Calu3 (cell line): ENCODE measurements at regions of chr3 and their contacts with region 1.

Region 1: GRCh38 chr3:177220136-177220974 is 23.1 kb upstream of the TBL1XR1 start:
- DNase-seq: no peak
- H3K4me3 Mint-ChIP-seq: no peak overlapping the region
- H3K27ac Mint-ChIP-seq: no peak overlapping the region
- H3K4me1 Mint-ChIP-seq: peaks cover 12% of the 10 kb centered on the region
- H3K27me3 Mint-ChIP-seq: no peaks in the 10 kb centered on the region
- CTCF ChIP-seq: no peak

Region 2: GRCh38 chr3:177333533-177334520 is 113.5 kb after region 1 on chr3:
- CTCF ChIA-PET with region 1: interaction called, 10 read pairs
- intact Hi-C with region 1: no loop called
- DNase-seq: no peak
- H3K4me3 Mint-ChIP-seq: no peak overlapping the region
- H3K27ac Mint-ChIP-seq: no peak overlapping the region
- H3K4me1 Mint-ChIP-seq: peaks cover 30% of the 10 kb centered on the region
- H3K27me3 Mint-ChIP-seq: no peaks in the 10 kb centered on the region
- CTCF ChIP-seq: no peak

Region 3: DNA sequence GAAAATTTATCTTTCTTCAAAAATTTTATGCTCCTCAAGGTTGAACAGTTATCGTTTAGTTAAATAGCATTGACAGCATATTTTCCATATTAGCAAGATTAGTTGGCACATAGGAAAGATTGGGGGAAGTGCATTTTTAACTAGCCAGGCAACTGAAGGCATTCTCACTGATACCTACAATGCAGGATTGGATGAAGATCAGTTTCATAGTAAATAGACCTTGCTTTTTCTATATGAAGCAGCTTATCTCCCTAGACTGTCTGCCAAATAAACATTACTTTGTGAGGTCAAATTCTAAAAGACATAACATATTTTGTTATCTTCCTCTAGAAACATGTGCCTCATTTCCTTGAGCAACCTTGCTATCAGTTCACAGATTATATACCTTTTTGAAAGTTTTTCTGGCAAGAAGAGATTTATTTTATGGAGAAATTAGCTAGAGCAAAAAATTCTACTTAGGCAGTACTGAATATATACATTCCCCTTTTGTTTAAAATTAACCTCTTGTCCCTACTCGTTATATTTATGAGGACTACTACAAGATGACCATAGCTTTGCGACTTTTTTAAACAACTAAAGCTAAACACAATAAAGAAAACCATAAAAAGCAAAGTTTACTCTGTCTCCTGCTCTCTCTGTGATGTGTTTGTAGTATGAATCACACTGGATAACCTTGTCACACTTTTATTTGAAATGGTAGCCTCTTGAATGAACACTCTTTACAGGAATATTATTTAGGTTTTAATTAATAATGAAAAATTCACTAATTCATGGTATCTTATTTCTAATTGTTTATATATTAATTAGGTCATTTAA is 631.9 kb after region 1 on chr3:
- CTCF ChIA-PET with region 1: no interaction called
- intact Hi-C with region 1: no loop called
- DNase-seq: no peak
- H3K4me3 Mint-ChIP-seq: no peak overlapping the region
- H3K27ac Mint-ChIP-seq: no peak overlapping the region
- H3K4me1 Mint-ChIP-seq: peaks cover 10% of the 10 kb centered on the region
- H3K27me3 Mint-ChIP-seq: no peaks in the 10 kb centered on the region
- CTCF ChIP-seq: no peak